Activated B cell treated with CpG ODN at 0.5 μM for 24 hours (primary cell): ENCODE measurements at regions of chr4 and their contacts with region 1.

Region 1: GRCh38 chr4:140523857-140524742 is at the start of gene ELMOD2:
- DNase-seq: peak; percentile 94
- ATAC-seq: peak; percentile 99
- H3K4me3 Mint-ChIP-seq: peak within 1 kb of the TSS; percentile 90
- H3K27ac Mint-ChIP-seq: peak within 1 kb of the TSS; percentile 84
- H3K4me1 Mint-ChIP-seq: peaks cover 14% of the 10 kb centered on the region
- H3K27me3 Mint-ChIP-seq: no peaks in the 10 kb centered on the region
- CTCF ChIP-seq: peak; percentile 72
- total RNA-seq, gene ELMOD2: 20.4 and 20.8 TPM in 2 replicates

Region 2: DNA sequence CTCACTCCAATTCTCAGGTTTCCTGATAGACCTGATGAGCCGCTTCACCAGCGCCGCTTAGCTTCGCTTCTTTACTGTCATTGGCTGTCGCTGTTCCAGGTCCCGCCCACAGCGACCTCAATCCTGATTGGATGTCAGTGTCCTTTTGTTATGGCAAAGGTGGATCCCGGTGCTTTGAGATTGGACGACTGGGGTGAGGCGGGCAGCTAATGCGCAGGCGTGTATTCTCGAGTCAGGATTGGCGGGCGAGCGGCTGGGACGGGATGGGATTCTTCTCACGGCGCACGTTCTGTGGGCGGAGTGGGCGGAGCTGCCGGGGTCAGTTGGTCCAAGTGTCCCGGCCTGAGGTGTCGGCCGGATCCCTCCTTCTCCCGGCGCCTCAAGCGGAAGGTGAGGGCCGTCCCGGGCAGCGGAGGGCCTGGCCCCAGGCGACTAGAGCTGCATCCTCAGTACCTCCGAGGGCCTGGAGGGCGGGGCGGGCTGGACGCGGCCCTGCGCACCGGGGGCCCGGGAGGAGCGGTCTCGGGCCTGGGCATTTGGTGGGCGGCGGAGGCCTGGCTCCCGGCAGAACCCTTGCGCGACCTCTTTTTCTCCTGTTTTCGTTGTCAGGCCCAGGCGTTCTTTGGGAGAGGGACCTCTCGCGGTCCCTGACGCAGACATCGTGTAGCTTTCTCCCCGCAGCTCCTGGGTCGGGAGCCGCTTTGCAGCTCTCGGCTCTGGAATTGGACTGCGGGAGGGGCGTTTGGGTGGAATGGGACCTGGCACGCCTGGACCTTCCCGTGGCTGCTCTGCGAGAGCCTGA is 150.6 kb before region 1 on chr4 and contains the start of gene SCOC:
- CTCF ChIA-PET with region 1: interaction called, 7 read pairs
- POLR2A ChIA-PET with region 1: interaction called, 11 read pairs
- intact Hi-C with region 1: loop called (anchors 1 kb)
- DNase-seq: peak; percentile 85
- ATAC-seq: peak; percentile 95
- H3K4me3 Mint-ChIP-seq: no peak within 1 kb of the TSS
- H3K27ac Mint-ChIP-seq: peak within 1 kb of the TSS; percentile 74
- H3K4me1 Mint-ChIP-seq: peaks cover 22% of the 10 kb centered on the region
- H3K27me3 Mint-ChIP-seq: no peaks in the 10 kb centered on the region
- CTCF ChIP-seq: no peak
- total RNA-seq, gene SCOC: 18.0 and 19.9 TPM in 2 replicates

Region 3: GRCh38 chr4:140427106-140427961 is 96.8 kb before region 1 on chr4 and contains the start of gene CLGN:
- CTCF ChIA-PET with region 1: no interaction called
- POLR2A ChIA-PET with region 1: no interaction called
- intact Hi-C with region 1: loop called (anchors 2 kb)
- DNase-seq: peak; percentile 58
- ATAC-seq: peak; percentile 91
- H3K4me3 Mint-ChIP-seq: peak within 1 kb of the TSS; percentile 85
- H3K27ac Mint-ChIP-seq: no peak within 1 kb of the TSS
- H3K4me1 Mint-ChIP-seq: peaks cover 12% of the 10 kb centered on the region
- H3K27me3 Mint-ChIP-seq: peaks cover 48% of the 10 kb centered on the region
- CTCF ChIP-seq: no peak
- total RNA-seq, gene CLGN: not detected in 2 replicates

Region 4: GRCh38 chr4:140556372-140557085 is 32.4 kb after region 1 on chr4:
- CTCF ChIA-PET with region 1: interaction called, 3 read pairs
- POLR2A ChIA-PET with region 1: interaction called, 6 read pairs
- intact Hi-C with region 1: loop called (anchors 1 kb)
- DNase-seq: no peak
- ATAC-seq: peak; percentile 96
- H3K4me3 Mint-ChIP-seq: peak overlapping the region; percentile 44
- H3K27ac Mint-ChIP-seq: no peak overlapping the region
- H3K4me1 Mint-ChIP-seq: peaks cover 18% of the 10 kb centered on the region
- H3K27me3 Mint-ChIP-seq: peaks cover 21% of the 10 kb centered on the region
- CTCF ChIP-seq: no peak

Region 5: DNA sequence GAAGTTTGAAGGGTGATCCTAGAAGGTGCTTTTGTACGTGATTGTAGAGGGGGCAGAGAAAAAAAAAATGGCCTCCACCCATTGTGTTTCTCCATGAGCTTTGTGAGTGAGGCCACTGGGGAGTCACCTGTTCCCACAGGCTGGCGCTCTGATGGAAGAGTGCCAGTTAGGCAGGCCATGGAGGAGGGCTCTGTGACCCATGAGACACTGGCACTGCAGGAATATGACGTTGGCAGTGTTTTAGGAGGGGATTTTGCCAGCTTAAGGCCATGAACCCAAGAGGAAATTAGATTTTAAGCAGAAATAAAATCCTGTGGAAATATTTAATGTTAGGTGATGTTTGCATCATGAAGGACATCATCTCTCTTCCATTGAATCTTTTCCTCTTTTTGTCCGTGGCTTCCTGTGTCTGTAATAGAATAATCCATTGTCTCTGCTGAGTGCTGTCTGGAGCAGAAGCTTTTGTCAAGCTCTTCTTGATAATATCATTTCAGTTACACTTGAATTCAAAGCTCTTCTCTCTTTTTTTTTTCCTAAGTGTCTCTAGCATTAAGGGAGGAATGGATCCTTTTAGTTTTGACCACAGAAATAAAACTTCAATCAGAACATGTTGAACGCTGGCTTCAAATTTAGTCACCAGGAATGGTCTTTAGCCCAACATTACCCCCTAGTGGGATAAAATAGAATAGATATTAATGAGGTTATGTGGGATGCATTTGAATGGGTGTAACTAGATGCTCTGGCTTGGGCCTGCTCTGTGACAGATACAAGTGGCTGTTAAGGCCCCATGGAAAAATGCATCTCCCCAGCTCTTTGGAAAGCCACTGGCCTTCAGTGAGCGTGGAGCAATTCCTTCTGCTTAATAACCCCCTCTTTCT is 85.7 kb after region 1 on chr4:
- CTCF ChIA-PET with region 1: interaction called, 4 read pairs
- POLR2A ChIA-PET with region 1: interaction called, 9 read pairs
- intact Hi-C with region 1: loop called (anchors 1 kb)
- DNase-seq: no peak
- ATAC-seq: peak; percentile 83
- H3K4me3 Mint-ChIP-seq: no peak overlapping the region
- H3K27ac Mint-ChIP-seq: no peak overlapping the region
- H3K4me1 Mint-ChIP-seq: peaks cover 12% of the 10 kb centered on the region
- H3K27me3 Mint-ChIP-seq: peaks cover 8% of the 10 kb centered on the region
- CTCF ChIP-seq: peak; percentile 49

Region 6: DNA sequence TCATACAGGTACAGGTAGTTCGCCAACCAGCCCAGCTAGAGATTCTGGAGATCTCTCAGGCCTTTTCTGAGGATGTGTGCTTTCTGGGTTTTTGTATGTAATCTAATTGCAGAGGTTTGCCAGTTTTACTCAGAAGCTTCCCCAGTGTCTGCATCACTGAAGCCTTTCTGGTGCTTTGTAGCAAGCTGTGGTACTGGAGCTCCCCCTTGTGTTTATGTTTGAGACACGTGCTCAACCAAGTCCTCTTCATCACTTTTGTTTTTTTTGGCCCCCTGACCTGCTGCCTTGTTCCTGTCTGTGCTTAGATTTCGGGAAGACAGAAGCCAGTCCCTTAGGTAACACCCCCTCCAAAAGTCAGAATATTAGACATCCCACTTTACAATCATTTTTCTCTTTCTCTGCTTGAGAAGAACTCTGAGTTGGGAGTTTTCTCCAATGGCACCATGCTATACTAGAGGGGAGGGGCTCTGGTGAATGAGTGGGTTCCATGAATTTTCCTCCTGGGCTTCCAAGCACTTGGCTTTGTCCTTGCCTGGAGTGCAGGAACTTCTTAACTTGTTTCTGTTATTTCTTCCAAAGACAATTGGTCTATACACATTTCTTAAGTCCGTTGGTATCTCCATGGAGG is 360.4 kb after region 1 on chr4:
- CTCF ChIA-PET with region 1: interaction called, 4 read pairs
- POLR2A ChIA-PET with region 1: no interaction called
- intact Hi-C with region 1: loop called (anchors 1 kb)
- DNase-seq: no peak
- ATAC-seq: peak; percentile 79
- H3K4me3 Mint-ChIP-seq: no peak overlapping the region
- H3K27ac Mint-ChIP-seq: no peak overlapping the region
- H3K4me1 Mint-ChIP-seq: no peaks in the 10 kb centered on the region
- H3K27me3 Mint-ChIP-seq: peaks cover 16% of the 10 kb centered on the region
- CTCF ChIP-seq: no peak

Region 7: DNA sequence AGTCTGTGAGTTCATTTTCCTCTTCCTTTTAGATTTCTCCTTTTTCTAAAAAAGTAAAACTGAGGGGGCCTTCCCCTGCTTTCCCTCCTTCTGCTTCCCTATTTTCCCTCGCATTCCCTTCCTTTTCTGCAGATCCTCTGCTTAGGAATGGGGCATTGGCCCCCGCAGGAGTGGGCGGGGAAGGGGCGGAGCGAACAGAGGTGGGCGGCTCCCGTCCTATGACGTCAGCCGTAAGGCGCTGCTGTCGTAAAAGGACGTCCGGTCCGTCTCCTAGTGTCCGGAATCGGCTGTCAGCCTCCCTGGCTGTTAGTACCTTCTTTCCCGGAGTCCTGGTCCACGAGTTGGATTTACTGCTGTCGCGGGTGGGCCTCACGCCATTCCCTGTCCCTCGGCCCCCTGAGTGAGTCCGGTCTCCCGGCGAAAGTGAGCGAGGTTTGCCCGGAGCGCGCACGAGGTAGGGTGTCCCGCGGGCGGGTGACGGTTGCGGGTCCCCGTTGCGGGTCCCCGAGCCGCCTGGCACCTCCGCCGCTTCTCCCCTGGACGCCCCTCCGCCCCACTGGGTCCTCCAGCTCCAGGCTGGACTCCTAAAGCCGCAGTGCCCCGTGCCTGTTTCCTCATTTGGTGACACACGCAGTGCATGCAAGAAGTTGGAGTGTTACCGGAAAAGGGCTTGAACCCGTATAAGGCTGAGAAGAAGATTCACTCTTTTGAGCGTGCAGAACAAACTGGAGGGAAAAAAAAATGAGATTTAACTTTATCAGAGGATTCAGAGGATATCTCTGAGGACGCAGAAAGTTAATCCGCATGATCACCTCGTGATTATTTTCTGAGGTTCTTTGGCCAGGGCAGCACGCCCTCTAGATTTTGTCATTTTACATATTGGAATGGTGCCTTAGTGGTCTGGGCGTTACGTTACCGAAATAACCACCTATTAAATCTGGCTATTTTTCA is 696.8 kb after region 1 on chr4 and contains the start of gene ZNF330:
- CTCF ChIA-PET with region 1: no interaction called
- POLR2A ChIA-PET with region 1: no interaction called
- intact Hi-C with region 1: loop called (anchors 2 kb)
- DNase-seq: peak; percentile 95
- ATAC-seq: peak; percentile 90
- H3K4me3 Mint-ChIP-seq: peak within 1 kb of the TSS; percentile 94
- H3K27ac Mint-ChIP-seq: peak within 1 kb of the TSS; percentile 89
- H3K4me1 Mint-ChIP-seq: peaks cover 28% of the 10 kb centered on the region
- H3K27me3 Mint-ChIP-seq: no peaks in the 10 kb centered on the region
- CTCF ChIP-seq: no peak
- total RNA-seq, gene ZNF330: 40.7 and 41.2 TPM in 2 replicates